ENCODE measurements at regions of chr11 and their contacts with region 1.

Region 1: GRCh38 chr11:57249384-57250319 is 12.6 kb upstream of the APLNR start:
- DNase-seq: peak; percentile 12
- H3K4me3 Mint-ChIP-seq: no peak overlapping the region
- H3K27ac Mint-ChIP-seq: no peak overlapping the region
- H3K4me1 Mint-ChIP-seq: no peaks in the 10 kb centered on the region
- H3K27me3 Mint-ChIP-seq: peaks cover 12% of the 10 kb centered on the region

Region 2: DNA sequence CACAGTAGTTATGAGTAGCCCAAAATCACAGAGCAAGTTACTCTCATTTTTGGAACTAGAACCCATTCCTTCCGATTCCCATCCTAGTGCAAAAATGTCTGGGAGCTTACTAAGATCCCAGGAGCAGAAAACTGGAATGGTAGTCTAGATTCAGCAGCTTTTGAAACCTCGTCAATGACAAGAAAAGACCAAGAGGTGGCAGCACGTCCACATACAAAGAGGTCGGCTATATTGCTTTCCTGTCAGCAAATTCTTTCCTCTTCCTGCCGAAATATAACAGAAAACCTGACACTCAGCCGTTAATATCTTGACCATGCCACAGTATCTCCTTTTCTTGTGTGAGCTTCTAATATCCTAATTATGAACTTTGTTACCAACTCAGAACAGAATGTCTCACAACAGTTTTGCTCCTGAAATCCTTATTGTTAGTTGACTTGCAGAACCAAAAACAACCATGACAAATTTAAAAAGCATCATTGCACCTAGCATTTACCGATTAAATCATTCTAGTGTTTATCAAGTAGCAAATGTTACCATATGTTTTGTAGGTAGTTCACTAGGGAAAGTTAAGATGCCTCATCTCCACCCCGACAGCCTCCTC is 408.3 kb before region 1 on chr11:
- intact Hi-C with region 1: loop called (anchors 1 kb)
- DNase-seq: peak; percentile 7
- H3K4me3 Mint-ChIP-seq: no peak overlapping the region
- H3K27ac Mint-ChIP-seq: no peak overlapping the region
- H3K4me1 Mint-ChIP-seq: peaks cover 5% of the 10 kb centered on the region
- H3K27me3 Mint-ChIP-seq: peaks cover 6% of the 10 kb centered on the region

Region 3: GRCh38 chr11:56917708-56918400 is 331.8 kb before region 1 on chr11:
- intact Hi-C with region 1: no loop called
- DNase-seq: no peak
- H3K4me3 Mint-ChIP-seq: no peak overlapping the region
- H3K27ac Mint-ChIP-seq: peak overlapping the region; percentile 74
- H3K4me1 Mint-ChIP-seq: peaks cover 7% of the 10 kb centered on the region
- H3K27me3 Mint-ChIP-seq: no peaks in the 10 kb centered on the region

Region 4: GRCh38 chr11:57001674-57002401 is 247.8 kb before region 1 on chr11:
- intact Hi-C with region 1: loop called (anchors 2 kb)
- DNase-seq: no peak
- H3K4me3 Mint-ChIP-seq: no peak overlapping the region
- H3K27ac Mint-ChIP-seq: no peak overlapping the region
- H3K4me1 Mint-ChIP-seq: no peaks in the 10 kb centered on the region
- H3K27me3 Mint-ChIP-seq: no peaks in the 10 kb centered on the region

Region 5: DNA sequence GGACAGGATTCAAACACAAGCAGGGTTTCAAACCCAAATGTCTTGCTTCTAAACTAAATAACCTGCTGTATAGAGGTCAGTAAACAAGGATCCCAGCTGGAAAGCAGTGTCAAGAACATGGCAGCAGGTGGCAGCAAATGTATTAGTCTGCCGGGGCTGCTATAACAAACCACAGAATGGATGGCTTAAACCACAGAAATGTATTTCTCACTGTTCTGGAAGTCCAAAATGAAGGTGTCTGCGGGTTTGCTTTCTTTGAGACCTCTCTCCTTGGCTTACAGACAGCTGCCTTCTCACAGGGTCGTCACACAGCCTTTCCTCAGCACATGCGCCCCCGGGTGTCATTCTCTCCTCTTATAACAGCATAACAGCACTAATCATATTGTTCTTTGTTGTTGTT is 133.0 kb before region 1 on chr11:
- intact Hi-C with region 1: loop called (anchors 1 kb)
- DNase-seq: no peak
- H3K4me3 Mint-ChIP-seq: no peak overlapping the region
- H3K27ac Mint-ChIP-seq: no peak overlapping the region
- H3K4me1 Mint-ChIP-seq: no peaks in the 10 kb centered on the region
- H3K27me3 Mint-ChIP-seq: peaks cover 2% of the 10 kb centered on the region